ENCODE measurements at regions of chr4 and their contacts with region 1.

Region 1: DNA sequence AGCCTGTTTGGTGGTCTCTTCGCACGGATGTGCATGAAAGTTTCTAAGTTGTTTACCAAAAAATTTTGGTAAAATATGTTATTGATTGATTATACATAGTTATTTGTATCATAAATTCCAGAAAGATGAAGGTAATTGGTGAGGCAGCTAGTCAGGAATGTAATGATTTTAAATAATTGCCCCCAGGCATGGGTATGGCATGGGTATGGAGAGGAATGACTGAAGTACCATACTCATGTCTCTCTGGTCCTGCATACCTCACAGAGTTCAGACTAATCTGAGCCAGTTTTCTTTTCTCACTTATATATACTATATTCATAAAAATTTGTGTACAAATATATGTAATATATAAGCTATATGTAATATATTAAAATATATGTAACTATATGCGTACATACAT is 329.0 kb upstream of the TECRL start:
- DNase-seq: no peak

Region 2: GRCh38 chr4:63851496-63851895 is 886.7 kb before region 1 on chr4:
- intact Hi-C with region 1: no loop called
- DNase-seq: no peak

Region 3: GRCh38 chr4:65102419-65102818 is 364.2 kb after region 1 on chr4:
- intact Hi-C with region 1: loop called in 1 of 2 experiments (anchors 5 kb)
- DNase-seq: no peak